Activated CD4-positive, alpha-beta T cell treated with anti-CD3 and anti-CD28 coated beads for 36 hours (primary cell): ENCODE measurements at regions of chr1 and their contacts with region 1.

Region 1: GRCh38 chr1:204494281-204495077 is at the start of gene PIK3C2B:
- DNase-seq: peak; percentile 86
- ATAC-seq: peak; percentile 77
- H3K4me3 Mint-ChIP-seq: peak within 1 kb of the TSS; percentile 95
- H3K27ac Mint-ChIP-seq: peak within 1 kb of the TSS; percentile 91
- H3K4me1 Mint-ChIP-seq: peaks cover 62% of the 10 kb centered on the region
- H3K27me3 Mint-ChIP-seq: no peaks in the 10 kb centered on the region
- total RNA-seq, gene PIK3C2B: 38.2 to 44.0 TPM

Region 2: DNA sequence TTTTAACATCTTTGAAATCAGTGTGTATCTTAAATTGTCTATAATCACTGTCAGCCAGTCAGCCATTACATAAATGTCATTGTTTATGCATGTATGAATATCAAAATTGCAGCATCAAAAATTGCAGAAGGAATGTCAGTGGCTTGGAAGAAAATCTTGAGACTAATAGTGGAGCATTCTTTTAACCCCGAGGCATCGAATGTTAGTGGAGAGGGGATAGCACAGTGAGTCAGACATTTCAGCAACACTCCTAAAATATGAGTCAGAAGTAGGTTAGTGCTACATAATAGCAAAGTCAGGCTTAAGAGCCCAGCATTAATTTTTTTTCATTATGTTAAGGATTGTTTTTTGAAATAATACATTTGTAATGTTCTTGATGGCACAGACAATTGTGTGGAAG is 587.5 kb before region 1 on chr1:
- CTCF ChIA-PET with region 1: no interaction called
- POLR2A ChIA-PET with region 1: no interaction called
- intact Hi-C with region 1: no loop called
- DNase-seq: no peak
- ATAC-seq: no peak
- H3K4me3 Mint-ChIP-seq: no peak overlapping the region
- H3K27ac Mint-ChIP-seq: no peak overlapping the region
- H3K4me1 Mint-ChIP-seq: no peaks in the 10 kb centered on the region
- H3K27me3 Mint-ChIP-seq: peaks cover 4% of the 10 kb centered on the region

Region 3: DNA sequence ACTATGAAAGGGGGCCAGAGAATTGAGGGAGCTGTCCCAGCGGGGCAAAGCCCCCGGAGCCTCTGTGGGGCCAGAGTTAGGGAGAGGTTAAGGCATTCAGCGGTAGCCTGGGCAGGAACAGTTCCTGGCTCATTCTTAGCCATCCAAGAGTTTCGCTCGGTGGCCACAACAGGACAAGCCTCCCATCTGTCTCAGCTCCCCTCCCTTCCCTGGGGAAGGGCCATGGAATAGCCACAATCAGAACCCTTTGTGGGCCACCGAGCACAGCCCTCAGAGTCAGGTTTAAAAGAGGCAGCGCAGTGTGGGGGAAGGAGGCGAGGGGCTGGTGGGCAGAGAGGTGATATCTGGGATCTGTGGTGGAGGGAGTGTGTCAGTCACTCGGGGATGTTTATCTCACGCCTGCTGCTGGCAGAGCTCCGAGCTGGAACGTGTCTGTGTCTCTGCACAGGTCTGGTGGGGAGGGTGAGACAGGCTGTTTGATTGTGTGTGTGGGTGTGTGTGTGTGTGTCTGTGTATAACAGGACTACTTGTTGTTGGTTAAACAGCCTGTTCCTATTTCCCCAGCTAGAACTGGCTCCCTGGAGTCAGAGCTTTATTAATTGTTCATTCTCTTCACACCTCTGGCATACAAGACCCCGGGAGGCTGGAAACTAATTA is 231.1 kb before region 1 on chr1:
- CTCF ChIA-PET with region 1: no interaction called
- POLR2A ChIA-PET with region 1: no interaction called
- intact Hi-C with region 1: no loop called
- DNase-seq: no peak
- ATAC-seq: no peak
- H3K4me3 Mint-ChIP-seq: no peak overlapping the region
- H3K27ac Mint-ChIP-seq: no peak overlapping the region
- H3K4me1 Mint-ChIP-seq: no peaks in the 10 kb centered on the region
- H3K27me3 Mint-ChIP-seq: no peaks in the 10 kb centered on the region

Region 4: DNA sequence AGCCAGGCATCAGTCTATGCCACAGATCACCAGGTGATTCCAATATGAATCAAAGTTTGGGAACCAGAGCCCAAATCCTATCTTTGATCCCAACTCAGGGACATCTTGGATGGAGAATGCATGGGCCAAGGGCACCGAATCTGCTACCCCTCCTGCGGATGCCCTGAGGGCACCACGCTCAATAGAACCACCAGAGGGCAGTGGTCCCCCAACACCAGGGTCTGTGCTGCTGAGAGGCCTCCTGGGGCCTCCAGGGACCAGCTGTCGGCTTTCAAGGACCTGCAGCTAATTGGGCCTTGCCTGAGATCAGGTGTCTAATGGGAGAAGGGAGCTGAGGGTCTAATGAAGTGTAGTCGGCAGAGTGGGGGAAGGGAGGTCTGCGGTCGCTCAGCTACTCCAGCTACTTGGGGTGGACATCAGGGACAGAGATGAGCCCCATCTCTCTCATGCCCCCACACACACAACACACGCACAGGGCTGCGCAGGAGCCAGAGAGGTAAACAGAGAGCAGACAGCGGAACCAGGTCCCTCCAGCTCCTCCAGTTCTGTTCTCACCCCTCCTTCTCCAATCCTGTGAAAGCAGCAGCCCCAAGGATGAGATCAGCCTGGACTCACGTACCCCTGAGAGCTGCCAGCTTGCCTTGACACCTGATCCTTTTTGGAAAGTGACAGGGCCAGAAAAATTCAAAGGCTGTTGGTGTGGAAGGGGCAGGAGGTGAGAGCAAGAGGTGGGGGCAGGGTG is 47.9 kb before region 1 on chr1:
- CTCF ChIA-PET with region 1: interaction called, 910 read pairs
- POLR2A ChIA-PET with region 1: interaction called, 4 read pairs
- intact Hi-C with region 1: loop called (anchors 1 to 2 kb)
- DNase-seq: peak; percentile 86
- ATAC-seq: peak; percentile 82
- H3K4me3 Mint-ChIP-seq: no peak overlapping the region
- H3K27ac Mint-ChIP-seq: peak overlapping the region; percentile 86
- H3K4me1 Mint-ChIP-seq: peaks cover 49% of the 10 kb centered on the region
- H3K27me3 Mint-ChIP-seq: no peaks in the 10 kb centered on the region

Region 5: GRCh38 chr1:204453141-204453772 is 41.2 kb before region 1 on chr1:
- CTCF ChIA-PET with region 1: interaction called, 910 read pairs
- POLR2A ChIA-PET with region 1: interaction called, 4 read pairs
- intact Hi-C with region 1: loop called in 1 of 2 experiments (anchors 1 kb)
- DNase-seq: peak; percentile 86
- ATAC-seq: peak; percentile 96
- H3K4me3 Mint-ChIP-seq: peak overlapping the region; percentile 22
- H3K27ac Mint-ChIP-seq: peak overlapping the region; percentile 95
- H3K4me1 Mint-ChIP-seq: peaks cover 37% of the 10 kb centered on the region
- H3K27me3 Mint-ChIP-seq: no peaks in the 10 kb centered on the region

Region 6: GRCh38 chr1:204480515-204480914 is 14.0 kb before region 1 on chr1:
- CTCF ChIA-PET with region 1: interaction called, 30 read pairs
- POLR2A ChIA-PET with region 1: interaction called, 4 read pairs
- intact Hi-C with region 1: no loop called
- DNase-seq: peak; percentile 33
- ATAC-seq: peak; percentile 67
- H3K4me3 Mint-ChIP-seq: no peak overlapping the region
- H3K27ac Mint-ChIP-seq: no peak overlapping the region
- H3K4me1 Mint-ChIP-seq: peaks cover 52% of the 10 kb centered on the region
- H3K27me3 Mint-ChIP-seq: no peaks in the 10 kb centered on the region

Region 7: DNA sequence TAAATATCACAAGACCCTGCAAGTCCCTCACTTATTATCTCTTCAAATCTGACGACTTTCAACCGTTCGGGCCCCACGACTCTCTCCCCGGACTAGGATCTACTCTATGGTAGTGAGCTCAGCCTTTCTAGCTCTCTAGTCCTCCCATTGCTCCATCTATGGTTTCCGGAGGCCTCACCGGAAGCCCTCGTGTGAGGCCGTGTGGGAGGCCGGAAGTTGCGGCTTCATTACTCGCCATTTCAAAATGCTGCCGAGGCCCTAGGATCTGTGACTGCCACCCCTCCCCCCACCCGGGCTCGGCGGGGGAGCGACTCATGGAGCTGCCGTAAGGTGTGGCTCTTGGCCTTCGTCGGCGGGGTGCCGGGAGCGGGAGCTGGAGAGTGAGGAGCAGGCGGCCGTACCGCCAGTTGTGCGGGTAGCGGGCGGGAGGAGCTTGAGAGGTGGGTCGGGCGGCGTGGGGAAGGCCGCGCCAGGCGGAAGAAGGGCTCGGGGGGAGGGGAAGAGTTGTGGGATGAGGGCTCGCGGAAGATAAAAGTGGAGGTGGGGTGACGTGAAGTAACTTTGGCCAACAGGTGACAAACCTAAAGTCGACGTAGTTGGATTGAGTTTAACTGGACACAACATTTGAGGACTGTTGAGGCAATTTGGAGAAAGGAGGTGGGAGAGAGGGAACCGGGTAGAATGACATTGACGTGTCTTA is 21.9 kb after region 1 on chr1 and contains the start of gene MDM4:
- CTCF ChIA-PET with region 1: interaction called, 8 read pairs
- POLR2A ChIA-PET with region 1: interaction called, 13 read pairs
- intact Hi-C with region 1: loop called in 1 of 2 experiments (anchors 1 kb)
- DNase-seq: peak; percentile 98
- ATAC-seq: peak; percentile 85
- H3K4me3 Mint-ChIP-seq: no peak within 1 kb of the TSS
- H3K27ac Mint-ChIP-seq: no peak within 1 kb of the TSS
- H3K4me1 Mint-ChIP-seq: peaks cover 62% of the 10 kb centered on the region
- H3K27me3 Mint-ChIP-seq: no peaks in the 10 kb centered on the region
- total RNA-seq, gene MDM4: 89.1 to 94.6 TPM